Activated CD8-positive, alpha-beta T cell treated with anti-CD3 and anti-CD28 coated beads, Interleukin-2, amount 10 ng/mL, durations not matched to agents 7 days and 5 days (primary cell): ENCODE measurements at regions of chr2 and their contacts with region 1.

Region 1: DNA sequence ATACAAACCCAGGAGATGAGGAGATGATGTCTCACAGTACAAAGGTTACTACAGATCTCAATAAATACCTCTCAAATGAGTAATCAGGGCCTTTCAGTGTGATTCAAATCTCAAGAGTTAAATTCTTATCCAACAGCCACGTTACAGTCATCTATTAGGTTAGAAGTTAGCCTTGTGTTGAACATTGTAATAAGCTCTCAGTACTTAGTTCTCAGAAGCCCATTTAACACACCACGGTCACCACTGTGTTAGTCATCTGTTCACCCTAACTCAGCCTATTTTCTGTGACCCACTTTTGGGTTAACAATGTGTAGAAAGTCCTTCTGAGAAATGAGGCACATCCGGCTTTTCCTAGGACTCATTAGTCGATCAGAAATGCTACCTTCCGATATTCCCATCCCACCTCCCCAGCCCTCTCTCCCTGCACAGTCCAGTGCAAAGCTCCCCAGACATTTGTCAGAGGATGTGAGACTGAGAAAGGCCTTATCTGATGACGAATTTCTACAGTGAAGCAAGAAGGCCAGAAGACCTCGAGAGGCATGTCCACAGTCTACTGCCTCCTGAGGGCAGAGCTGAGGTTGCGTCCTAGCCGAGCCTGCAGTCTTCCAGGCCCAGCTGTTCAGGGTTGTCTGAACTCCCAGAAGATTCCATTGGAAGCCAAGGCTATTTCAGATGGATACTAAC is 92.6 kb downstream of the ACTR2 start:
- DNase-seq: no peak
- ATAC-seq: peak; percentile 62
- H3K4me3 Mint-ChIP-seq: no peak overlapping the region
- H3K27ac Mint-ChIP-seq: no peak overlapping the region
- H3K4me1 Mint-ChIP-seq: peaks cover 22% of the 10 kb centered on the region
- H3K27me3 Mint-ChIP-seq: no peaks in the 10 kb centered on the region

Region 2: GRCh38 chr2:65300761-65301711 is 19.1 kb before region 1 on chr2:
- CTCF ChIA-PET with region 1: interaction called, 15 read pairs
- POLR2A ChIA-PET with region 1: no interaction called
- DNase-seq: peak; percentile 87
- ATAC-seq: peak; percentile 96
- H3K4me3 Mint-ChIP-seq: peak overlapping the region; percentile 74
- H3K27ac Mint-ChIP-seq: peak overlapping the region; percentile 94
- H3K4me1 Mint-ChIP-seq: peaks cover 58% of the 10 kb centered on the region
- H3K27me3 Mint-ChIP-seq: peaks cover 25% of the 10 kb centered on the region